Gastrocnemius medialis (tissue), 4 donors: ENCODE measurements at regions of chr14 and their contacts with region 1.

Region 1: DNA sequence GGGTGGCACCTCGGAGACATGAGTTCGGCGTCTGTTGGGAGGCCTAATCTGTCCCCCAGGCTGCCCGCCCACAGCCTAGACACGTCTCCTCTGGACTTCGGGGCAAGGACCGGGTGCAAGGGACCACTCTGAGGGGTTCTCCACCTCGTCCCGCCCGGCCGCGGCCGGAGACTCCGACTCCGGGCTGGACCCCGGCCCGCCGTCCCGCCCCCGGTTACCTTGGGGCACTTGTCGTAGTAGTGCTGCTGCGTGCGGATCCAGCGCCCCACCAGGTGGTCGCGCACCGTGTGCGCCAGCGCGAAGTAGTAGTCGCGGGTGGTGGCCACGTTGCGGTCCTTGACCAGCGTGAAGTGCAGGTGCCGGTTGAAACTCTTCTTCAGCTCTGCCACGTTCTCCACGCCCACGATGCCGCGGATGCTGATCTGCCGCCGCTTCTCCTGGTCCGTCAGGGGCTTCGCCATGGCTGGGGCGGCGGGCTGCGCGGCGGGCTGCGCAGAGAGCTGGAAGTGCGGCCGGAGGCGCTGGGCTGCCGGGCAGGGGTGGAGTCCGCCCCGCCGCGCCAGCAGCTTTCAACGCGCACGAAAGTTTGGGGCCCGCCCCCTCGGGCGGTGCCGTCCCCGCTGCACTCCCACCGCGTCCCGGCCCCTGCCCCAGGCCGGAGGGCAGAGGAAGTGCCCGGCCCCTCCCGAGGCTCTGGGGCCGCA is at the start of gene PYGL:
- DNase-seq: peak; percentile 34 to 47
- ATAC-seq: peak; percentile 75 to 81
- H3K4me3 ChIP-seq: peak within 1 kb of the TSS; percentile 67 to 94 (median 80)
- H3K27ac ChIP-seq: peak within 1 kb of the TSS; percentile 33 to 69 (median 59)
- H3K4me1 ChIP-seq: peaks cover 4 to 7% of the 10 kb centered on the region in 2 donors
- H3K27me3 ChIP-seq: peaks cover 0 to 8% (median 3%) of the 10 kb centered on the region in 3 donors
- CTCF ChIP-seq: no peak
- POLR2A ChIP-seq: peak; percentile 33 to 41
- total RNA-seq, gene PYGL: 4.8 to 8.6 (median 6.4) TPM

Region 2: GRCh38 chr14:50785457-50786063 is 158.5 kb before region 1 on chr14:
- in situ Hi-C with region 1: no loop called
- intact Hi-C with region 1: no loop called
- DNase-seq: no peak
- ATAC-seq: no peak
- H3K4me3 ChIP-seq: no peak overlapping the region
- H3K27ac ChIP-seq: no peak overlapping the region
- H3K4me1 ChIP-seq: peaks cover 13 to 24% of the 10 kb centered on the region in 2 donors
- H3K27me3 ChIP-seq: no peaks in the 10 kb centered on the region
- CTCF ChIP-seq: no peak
- POLR2A ChIP-seq: no peak

Region 3: DNA sequence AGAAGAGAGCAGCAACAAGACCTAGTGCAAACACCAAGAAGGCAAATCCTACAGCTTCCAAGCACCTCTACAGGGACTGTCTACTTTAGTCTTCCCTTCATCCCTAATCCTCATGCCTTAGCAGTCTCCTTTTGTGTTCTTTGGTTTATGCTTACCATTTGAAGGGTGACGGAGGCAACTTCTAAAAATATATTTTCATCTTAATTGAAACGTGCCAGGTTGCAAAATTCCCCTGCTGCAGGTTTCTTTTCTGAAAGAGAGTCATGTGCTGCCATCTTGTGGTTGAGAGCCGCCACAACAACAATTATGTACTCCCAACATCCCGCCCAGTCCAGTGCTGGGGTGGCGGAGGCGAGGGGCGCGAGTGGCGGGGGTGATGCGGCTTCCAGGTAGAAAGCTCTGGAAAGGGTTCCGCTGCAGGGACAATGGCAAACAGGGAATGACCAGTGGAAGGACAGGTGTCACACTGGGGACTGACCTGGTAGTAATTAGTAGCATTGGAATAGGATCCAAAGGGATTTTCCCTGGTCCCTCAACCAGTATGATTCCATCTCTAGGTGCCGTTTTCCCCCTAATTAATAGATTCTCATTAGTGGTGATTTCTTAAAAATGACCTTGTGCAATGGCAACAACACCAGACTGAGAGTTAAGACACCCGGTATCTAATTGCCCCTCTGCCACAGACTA is 836.1 kb after region 1 on chr14:
- in situ Hi-C with region 1: no loop called
- intact Hi-C with region 1: loop called (anchors 10 kb)
- DNase-seq: peak; percentile 25 to 59
- ATAC-seq: peak; percentile 54 to 81
- H3K4me3 ChIP-seq: no peak overlapping the region
- H3K27ac ChIP-seq: no peak overlapping the region
- H3K4me1 ChIP-seq: no peaks in the 10 kb centered on the region
- H3K27me3 ChIP-seq: no peaks in the 10 kb centered on the region
- CTCF ChIP-seq: peak; percentile 47 to 87 (median 83)
- POLR2A ChIP-seq: no peak